ENCODE measurements at regions of chr22 and their contacts with region 1.

Region 1: DNA sequence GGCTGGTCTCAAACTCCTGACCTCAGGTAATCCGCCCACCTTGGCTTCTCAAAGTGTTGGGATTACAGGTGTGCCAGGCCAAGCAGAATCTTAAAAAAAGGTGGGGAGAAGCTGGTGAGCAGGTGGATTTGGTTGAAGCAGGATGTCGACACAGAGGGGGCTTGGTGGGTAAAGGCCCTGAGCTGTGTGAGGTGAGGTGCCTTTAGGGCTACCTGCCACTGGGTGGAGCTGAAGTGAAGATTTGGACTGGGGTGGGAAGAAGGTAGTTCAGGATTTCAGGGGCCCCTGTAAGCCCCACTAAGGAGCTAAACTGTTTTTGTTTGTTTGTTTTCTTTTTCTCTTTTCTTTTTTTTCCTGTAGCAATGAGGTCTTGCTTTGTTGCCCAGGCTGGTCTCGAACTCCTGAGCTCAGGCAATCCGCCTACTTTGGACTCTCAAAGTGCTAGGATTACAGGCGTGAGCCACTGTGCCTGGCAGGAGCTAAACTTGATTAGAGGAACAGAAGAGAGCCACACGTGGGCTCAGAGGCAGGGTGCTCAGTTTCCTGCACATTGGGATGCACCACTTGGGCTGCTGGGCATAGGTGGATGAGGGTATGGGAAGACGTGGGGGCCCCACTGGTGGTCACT is 6.0 kb downstream of the P2RX6 start:
- DNase-seq: no peak
- ATAC-seq: peak in 1 of 8 donors; percentile 6
- H3K4me3 ChIP-seq: no peak overlapping the region
- H3K27ac ChIP-seq: no peak overlapping the region
- H3K4me1 ChIP-seq: peaks cover 0 to 2% (median 0%) of the 10 kb centered on the region in 9 donors
- H3K27me3 ChIP-seq: no peaks in the 10 kb centered on the region
- CTCF ChIP-seq: peak in 4 of 9 donors; percentile 5 to 37 (median 16)

Region 2: GRCh38 chr22:20946080-20946986 is 74.6 kb before region 1 on chr22:
- intact Hi-C with region 1: loop called in 1 of 10 experiments (anchors 10 kb)
- DNase-seq: no peak
- ATAC-seq: peak in 7 of 8 donors; percentile 17 to 92 (median 80)
- H3K4me3 ChIP-seq: no peak overlapping the region
- H3K27ac ChIP-seq: peak overlapping the region in 7 of 10 donors; percentile 19 to 55 (median 29)
- H3K4me1 ChIP-seq: peaks cover 8 to 46% (median 31%) of the 10 kb centered on the region in 9 donors
- H3K27me3 ChIP-seq: no peaks in the 10 kb centered on the region
- CTCF ChIP-seq: no peak

Region 3: GRCh38 chr22:21098099-21098671 is 77.3 kb after region 1 on chr22:
- intact Hi-C with region 1: no loop called
- DNase-seq: no peak
- ATAC-seq: no peak
- H3K4me3 ChIP-seq: no peak overlapping the region
- H3K27ac ChIP-seq: no peak overlapping the region
- H3K4me1 ChIP-seq: peaks cover 0 to 7% (median 5%) of the 10 kb centered on the region in 9 donors
- H3K27me3 ChIP-seq: peaks cover 0 to 32% (median 7%) of the 10 kb centered on the region in 7 donors
- CTCF ChIP-seq: no peak